Naive thymus-derived CD4-positive, alpha-beta T cell (primary cell): ENCODE measurements at regions of chr15 and their contacts with region 1.

Region 1: DNA sequence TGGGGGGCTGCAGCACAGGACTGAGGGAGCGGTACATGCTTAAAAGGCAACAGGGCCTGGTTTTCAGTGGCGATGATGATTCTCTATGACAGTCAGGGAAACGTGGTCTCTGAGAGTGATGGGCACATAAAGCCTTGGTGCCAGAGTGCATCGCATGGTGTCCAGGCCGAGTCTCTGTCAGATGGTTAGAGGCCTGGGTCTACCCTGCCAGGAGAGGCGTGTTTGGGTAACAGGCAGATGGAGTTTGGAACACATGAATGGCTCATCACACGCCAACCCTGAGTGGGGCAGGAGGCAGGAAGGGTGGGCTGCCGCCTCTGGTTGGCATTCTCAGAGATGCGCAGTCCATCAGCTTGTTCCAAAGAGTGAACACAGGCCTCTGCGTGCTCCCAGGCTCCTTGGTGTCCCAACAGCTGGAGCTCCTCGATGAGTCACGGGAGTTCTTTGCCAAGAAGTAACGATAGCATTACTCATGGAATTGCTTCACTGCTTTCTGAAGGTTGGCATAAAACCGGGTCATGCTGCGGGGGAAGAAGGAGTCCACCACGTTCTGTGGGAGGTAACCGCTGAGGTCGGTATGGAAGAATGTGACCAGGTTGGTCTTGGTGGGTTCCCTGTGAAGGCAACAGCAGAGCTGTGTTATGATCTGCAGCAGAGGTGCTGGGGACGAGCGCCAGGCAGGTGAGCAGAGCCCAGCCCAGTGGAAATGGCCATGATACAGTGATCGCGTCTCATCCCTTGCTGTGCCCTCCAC is 11.0 kb downstream of the STARD5 start:
- DNase-seq: no peak
- ATAC-seq: peak; percentile 41
- H3K4me3 ChIP-seq: no peak overlapping the region
- H3K4me3 Mint-ChIP-seq: peak overlapping the region in 7 of 10 donors; percentile 8 to 64 (median 46)
- H3K27ac ChIP-seq: peak overlapping the region; percentile 65
- H3K27ac Mint-ChIP-seq: peak overlapping the region in 8 of 9 donors; percentile 74 to 97 (median 90)
- H3K4me1 ChIP-seq: peaks cover 18 to 55% of the 10 kb centered on the region in 2 donors
- H3K4me1 Mint-ChIP-seq: peaks cover 53 to 97% (median 86%) of the 10 kb centered on the region in 7 donors
- H3K27me3 ChIP-seq: no peaks in the 10 kb centered on the region
- H3K27me3 Mint-ChIP-seq: no peaks in the 10 kb centered on the region

Region 2: GRCh38 chr15:80674245-80674614 is 638.7 kb before region 1 on chr15:
- CTCF ChIA-PET with region 1: no interaction called
- POLR2A ChIA-PET with region 1: no interaction called
- intact Hi-C with region 1: no loop called
- DNase-seq: no peak
- ATAC-seq: no peak
- H3K4me3 ChIP-seq: no peak overlapping the region
- H3K4me3 Mint-ChIP-seq: no peak overlapping the region
- H3K27ac ChIP-seq: no peak overlapping the region
- H3K27ac Mint-ChIP-seq: no peak overlapping the region
- H3K4me1 ChIP-seq: no peaks in the 10 kb centered on the region
- H3K4me1 Mint-ChIP-seq: peaks cover 0 to 6% (median 0%) of the 10 kb centered on the region in 7 donors
- H3K27me3 ChIP-seq: no peaks in the 10 kb centered on the region
- H3K27me3 Mint-ChIP-seq: peaks cover 3 to 40% (median 24%) of the 10 kb centered on the region in 5 donors

Region 3: DNA sequence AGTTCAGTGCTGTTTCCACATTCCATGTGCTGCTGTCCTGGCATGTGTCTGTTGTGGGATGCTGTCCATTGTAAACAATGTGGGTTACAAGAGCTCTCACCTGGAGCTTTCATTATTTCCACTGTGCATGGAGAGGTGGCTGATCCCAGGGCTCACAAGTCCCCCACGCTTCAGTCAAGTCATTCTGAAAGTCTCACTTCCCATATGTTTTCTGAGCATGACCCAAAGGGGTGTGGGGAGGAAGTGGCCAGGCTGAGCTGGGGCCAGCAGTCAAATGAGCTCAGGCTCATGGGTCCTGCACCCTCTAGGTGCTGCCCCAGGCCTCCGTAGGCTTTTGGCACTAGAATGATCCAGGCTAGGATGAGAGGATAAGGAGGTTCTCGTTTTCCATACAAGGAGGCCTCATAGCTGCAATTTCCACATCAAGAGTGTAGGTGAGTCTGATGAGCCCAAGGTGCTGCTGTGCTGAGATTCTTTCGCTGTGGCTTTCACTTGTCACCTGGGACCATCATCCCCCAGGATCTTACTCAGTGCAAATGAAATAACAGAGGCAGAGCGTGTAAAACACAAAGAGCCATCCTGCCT is 11.1 kb before region 1 on chr15:
- CTCF ChIA-PET with region 1: interaction called, 28 read pairs
- POLR2A ChIA-PET with region 1: interaction called, 516 read pairs
- intact Hi-C with region 1: loop called in 1 of 2 experiments (anchors 1 kb)
- DNase-seq: peak in 1 of 9 donors; percentile 60
- ATAC-seq: peak; percentile 61
- H3K4me3 ChIP-seq: peak overlapping the region; percentile 74
- H3K4me3 Mint-ChIP-seq: peak overlapping the region; percentile 80 to 100 (median 98)
- H3K27ac ChIP-seq: peak overlapping the region; percentile 87
- H3K27ac Mint-ChIP-seq: peak overlapping the region; percentile 79 to 100 (median 96)
- H3K4me1 ChIP-seq: peaks cover 46 to 59% of the 10 kb centered on the region in 2 donors
- H3K4me1 Mint-ChIP-seq: peaks cover 50 to 66% (median 64%) of the 10 kb centered on the region in 7 donors
- H3K27me3 ChIP-seq: no peaks in the 10 kb centered on the region
- H3K27me3 Mint-ChIP-seq: no peaks in the 10 kb centered on the region

Region 4: DNA sequence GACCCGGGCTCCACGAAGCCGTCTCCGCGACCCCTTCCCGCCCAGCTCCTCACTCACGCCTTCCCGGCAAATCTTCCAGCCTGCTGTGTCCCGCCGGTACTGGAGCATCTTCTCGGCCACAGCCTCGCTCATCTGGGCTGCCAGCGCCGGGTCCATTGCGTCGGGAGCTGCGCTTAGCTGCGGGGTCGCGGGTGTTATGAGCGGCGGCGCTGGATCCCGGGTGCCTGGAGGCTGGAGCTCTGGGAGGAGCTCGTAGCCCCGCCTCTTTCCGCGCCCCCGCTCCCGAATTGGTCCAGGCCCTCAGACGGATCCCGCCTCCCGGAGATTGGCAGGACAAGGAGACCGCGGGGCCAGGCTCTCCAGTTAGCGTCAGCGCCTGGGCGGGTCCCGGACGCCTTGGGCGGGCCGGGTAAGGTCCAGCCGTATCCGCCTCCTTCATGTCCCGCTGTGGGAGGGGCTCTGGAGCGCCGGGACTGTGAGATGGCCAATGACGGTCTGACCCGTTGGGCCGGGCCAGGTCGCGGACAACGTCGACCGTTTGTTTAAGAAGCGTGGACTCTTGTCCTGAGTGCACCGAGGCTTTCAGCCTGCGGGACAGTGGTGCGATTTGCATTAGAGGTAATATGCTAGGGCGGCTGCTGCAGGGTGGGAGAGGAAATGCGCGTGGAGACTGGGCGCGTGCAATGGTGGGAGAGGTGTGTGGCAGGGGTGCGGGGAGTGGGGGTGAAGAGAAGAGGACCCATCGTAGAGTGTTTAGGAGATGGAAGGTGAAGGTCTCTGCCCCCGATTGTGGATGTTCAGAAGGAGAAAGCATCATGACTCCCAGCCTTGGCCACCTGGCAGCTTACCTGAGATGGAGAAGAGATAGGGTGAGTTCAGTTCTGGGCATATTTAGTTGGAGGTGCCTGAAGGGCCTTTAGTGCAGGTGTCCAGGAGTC is 11.2 kb after region 1 on chr15 and contains the start of gene STARD5:
- CTCF ChIA-PET with region 1: interaction called, 3 read pairs
- POLR2A ChIA-PET with region 1: interaction called, 480 read pairs
- intact Hi-C with region 1: loop called in 1 of 2 experiments (anchors 1 kb)
- DNase-seq: peak; percentile 82 to 97 (median 92)
- ATAC-seq: peak; percentile 99
- H3K4me3 ChIP-seq: peak within 1 kb of the TSS; percentile 86
- H3K4me3 Mint-ChIP-seq: peak within 1 kb of the TSS; percentile 90 to 98 (median 94)
- H3K27ac ChIP-seq: peak within 1 kb of the TSS; percentile 78
- H3K27ac Mint-ChIP-seq: peak within 1 kb of the TSS; percentile 87 to 97 (median 92)
- H3K4me1 ChIP-seq: peaks cover 5 to 20% of the 10 kb centered on the region in 2 donors
- H3K4me1 Mint-ChIP-seq: peaks cover 31 to 65% (median 60%) of the 10 kb centered on the region in 7 donors
- H3K27me3 ChIP-seq: no peaks in the 10 kb centered on the region
- H3K27me3 Mint-ChIP-seq: no peaks in the 10 kb centered on the region
- total RNA-seq, gene STARD5: 5.0 to 11.7 (median 10.1) TPM

Region 5: GRCh38 chr15:81612630-81613029 is 299.7 kb after region 1 on chr15:
- CTCF ChIA-PET with region 1: no interaction called
- POLR2A ChIA-PET with region 1: no interaction called
- intact Hi-C with region 1: no loop called
- DNase-seq: no peak
- ATAC-seq: no peak
- H3K4me3 ChIP-seq: no peak overlapping the region
- H3K4me3 Mint-ChIP-seq: no peak overlapping the region
- H3K27ac ChIP-seq: no peak overlapping the region
- H3K27ac Mint-ChIP-seq: no peak overlapping the region
- H3K4me1 ChIP-seq: no peaks in the 10 kb centered on the region
- H3K4me1 Mint-ChIP-seq: peaks cover 0 to 4% (median 0%) of the 10 kb centered on the region in 7 donors
- H3K27me3 ChIP-seq: no peaks in the 10 kb centered on the region
- H3K27me3 Mint-ChIP-seq: peaks cover 6 to 22% (median 9%) of the 10 kb centered on the region in 5 donors